ENCODE measurements at regions of chr1 and their contacts with region 1.

Region 1: DNA sequence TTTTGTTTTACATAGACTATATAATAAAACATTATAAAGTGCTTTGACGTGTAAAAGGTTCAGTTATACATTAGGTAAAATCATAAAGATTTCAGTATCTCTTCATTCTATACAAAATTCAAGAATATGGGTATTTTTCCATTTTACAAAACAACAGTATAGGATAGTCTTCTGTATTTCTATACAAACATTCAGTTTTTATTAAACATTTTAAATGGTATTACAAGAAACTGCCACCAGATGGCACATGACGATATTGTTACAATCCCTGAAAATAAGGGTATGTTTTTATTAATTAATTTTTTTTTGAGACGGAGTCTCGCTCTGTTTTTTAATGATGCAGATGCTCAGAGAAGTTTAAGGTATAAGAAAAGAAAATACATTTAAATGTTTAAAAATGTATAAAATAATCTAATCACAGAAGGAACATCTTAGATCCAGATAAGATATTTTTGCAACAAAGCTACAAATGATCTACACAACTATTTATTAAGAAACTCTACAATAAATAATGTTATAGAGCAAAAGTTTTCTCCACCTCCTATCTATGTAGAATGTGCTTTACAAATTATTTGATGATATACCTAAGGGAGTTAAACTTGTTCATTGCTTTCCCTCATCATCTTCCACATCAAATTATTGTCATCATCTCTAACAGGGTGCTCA is 23.5 kb upstream of the RSBN1 start:
- DNase-seq: no peak
- ATAC-seq: no peak
- H3K4me3 ChIP-seq: no peak overlapping the region
- H3K27ac ChIP-seq: no peak overlapping the region
- H3K4me1 ChIP-seq: no peaks in the 10 kb centered on the region
- H3K27me3 ChIP-seq: no peaks in the 10 kb centered on the region
- CTCF ChIP-seq: peak; percentile 49 to 71 (median 70)
- POLR2A ChIP-seq: no peak

Region 2: DNA sequence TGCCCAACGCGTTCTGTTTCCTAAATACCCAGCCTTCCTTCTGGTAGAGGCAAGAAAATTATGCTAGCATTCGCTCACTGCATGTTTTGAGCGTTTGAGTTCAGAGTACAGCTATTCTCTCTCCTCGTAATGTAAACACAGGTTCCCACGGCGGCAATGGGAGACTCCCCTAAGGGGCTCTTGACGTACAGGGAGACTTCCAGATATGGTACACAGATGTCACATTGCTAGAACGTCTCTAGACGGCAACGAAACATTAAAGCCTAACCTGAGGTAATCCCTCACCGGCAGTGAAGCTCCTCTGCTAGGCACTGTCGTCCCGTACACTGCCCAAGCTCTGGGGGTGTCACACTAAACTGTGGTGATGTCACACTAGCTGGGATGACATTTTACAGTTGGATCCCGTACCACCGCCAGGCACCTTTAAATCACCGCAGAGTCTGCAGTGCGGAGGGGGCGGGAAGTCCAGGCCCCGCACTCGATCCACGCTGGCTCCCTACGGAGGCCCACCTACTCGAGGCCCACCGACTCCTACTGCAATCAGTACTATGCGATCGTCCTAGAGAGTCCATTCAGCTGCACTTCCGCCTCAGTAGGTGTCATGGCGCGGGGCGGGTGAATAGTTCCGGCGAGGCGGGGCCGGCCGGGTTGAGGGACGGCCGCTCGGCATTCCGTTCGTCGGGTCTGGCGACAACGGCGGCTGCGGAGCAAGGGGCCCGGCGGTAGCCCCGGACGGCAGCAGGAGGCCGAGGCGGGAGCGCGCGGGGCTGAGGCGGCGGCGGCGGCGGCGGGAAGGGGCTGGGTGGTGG is 93.4 kb after region 1 on chr1 and contains the start of gene HIPK1:
- in situ Hi-C with region 1: no loop called
- intact Hi-C with region 1: loop called (anchors 1 kb)
- DNase-seq: peak; percentile 86 to 88
- ATAC-seq: peak; percentile 88 to 89
- H3K4me3 ChIP-seq: peak within 1 kb of the TSS; percentile 86 to 98 (median 90)
- H3K27ac ChIP-seq: peak within 1 kb of the TSS; percentile 92 to 98 (median 94)
- H3K4me1 ChIP-seq: peaks cover 45% of the 10 kb centered on the region in 2 donors
- H3K27me3 ChIP-seq: no peaks in the 10 kb centered on the region
- CTCF ChIP-seq: peak in 1 of 5 experiments; percentile 28
- POLR2A ChIP-seq: peak; percentile 79 to 82
- total RNA-seq, gene HIPK1: 54.4 to 67.6 (median 60.0) TPM

Region 3: GRCh38 chr1:114040326-114041015 is 204.7 kb after region 1 on chr1:
- in situ Hi-C with region 1: no loop called
- intact Hi-C with region 1: no loop called
- DNase-seq: no peak
- ATAC-seq: peak; percentile 32 to 46
- H3K4me3 ChIP-seq: no peak overlapping the region
- H3K27ac ChIP-seq: no peak overlapping the region
- H3K4me1 ChIP-seq: no peaks in the 10 kb centered on the region
- H3K27me3 ChIP-seq: no peaks in the 10 kb centered on the region
- CTCF ChIP-seq: no peak
- POLR2A ChIP-seq: no peak

Region 4: GRCh38 chr1:114274621-114275317 is 439.0 kb after region 1 on chr1:
- in situ Hi-C with region 1: loop called (anchors 10 to 25 kb)
- intact Hi-C with region 1: no loop called
- DNase-seq: no peak
- ATAC-seq: no peak
- H3K4me3 ChIP-seq: no peak overlapping the region
- H3K27ac ChIP-seq: no peak overlapping the region
- H3K4me1 ChIP-seq: no peaks in the 10 kb centered on the region
- H3K27me3 ChIP-seq: no peaks in the 10 kb centered on the region
- CTCF ChIP-seq: no peak
- POLR2A ChIP-seq: no peak

Region 5: DNA sequence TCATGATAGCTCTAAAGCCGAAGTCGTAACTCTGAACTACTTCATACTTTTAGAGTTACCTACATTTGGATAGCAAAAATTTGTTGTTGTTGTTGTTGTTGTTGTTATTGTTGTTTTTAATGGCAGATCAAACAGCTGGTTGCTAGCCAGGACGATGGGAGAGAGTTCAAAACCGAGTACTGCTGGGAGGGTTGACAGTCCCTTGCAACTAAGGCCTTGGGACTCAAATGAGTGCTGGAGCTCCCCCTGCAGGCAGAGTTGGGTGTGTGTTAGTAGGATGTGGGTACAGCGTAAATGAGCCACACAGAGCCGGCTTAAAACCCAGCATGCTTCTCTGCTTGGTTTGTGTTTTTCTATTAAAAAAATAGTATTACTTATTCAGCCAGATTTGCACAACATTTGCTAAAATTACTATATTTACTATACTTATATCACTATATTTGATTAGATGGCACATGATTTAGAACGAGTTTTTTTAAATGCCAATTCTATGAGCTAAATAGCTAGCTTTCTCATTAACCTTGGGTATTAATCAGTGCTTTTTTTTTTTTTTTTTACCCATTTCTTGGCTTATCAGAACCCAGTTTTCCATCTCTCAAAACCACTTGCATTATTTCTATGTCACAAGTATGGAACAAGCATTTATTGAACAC is 447.1 kb after region 1 on chr1:
- in situ Hi-C with region 1: loop called (anchors 10 to 25 kb)
- intact Hi-C with region 1: loop called (anchors 5 kb)
- DNase-seq: peak; percentile 67 to 80
- ATAC-seq: peak; percentile 98 to 100
- H3K4me3 ChIP-seq: no peak overlapping the region
- H3K27ac ChIP-seq: no peak overlapping the region
- H3K4me1 ChIP-seq: no peaks in the 10 kb centered on the region
- H3K27me3 ChIP-seq: no peaks in the 10 kb centered on the region
- CTCF ChIP-seq: peak; percentile 81 to 89 (median 87)
- POLR2A ChIP-seq: no peak